B cell (primary cell): ENCODE measurements at regions of chr7 and their contacts with region 1.

Region 1: GRCh38 chr7:36736899-36737211 is 12.6 kb upstream of the AOAH start:
- DNase-seq: peak; percentile 55
- ATAC-seq: peak; percentile 77
- H3K4me3 ChIP-seq: peak overlapping the region in 1 of 5 experiments; percentile 2
- H3K4me3 Mint-ChIP-seq: peak overlapping the region; percentile 64
- H3K27ac ChIP-seq: peak overlapping the region in 1 of 2 donors; percentile 40
- H3K27ac Mint-ChIP-seq: peak overlapping the region; percentile 87
- H3K4me1 ChIP-seq: peaks cover 12 to 15% of the 10 kb centered on the region in 2 donors
- H3K4me1 Mint-ChIP-seq: peaks cover 18% of the 10 kb centered on the region
- H3K27me3 ChIP-seq: no peaks in the 10 kb centered on the region
- H3K27me3 Mint-ChIP-seq: no peaks in the 10 kb centered on the region
- CTCF ChIP-seq: no peak

Region 2: GRCh38 chr7:36708767-36709166 is 28.1 kb before region 1 on chr7:
- CTCF ChIA-PET with region 1: no interaction called
- POLR2A ChIA-PET with region 1: no interaction called
- intact Hi-C with region 1: no loop called
- DNase-seq: no peak
- ATAC-seq: no peak
- H3K4me3 ChIP-seq: no peak overlapping the region
- H3K4me3 Mint-ChIP-seq: no peak overlapping the region
- H3K27ac ChIP-seq: no peak overlapping the region
- H3K27ac Mint-ChIP-seq: no peak overlapping the region
- H3K4me1 ChIP-seq: no peaks in the 10 kb centered on the region
- H3K4me1 Mint-ChIP-seq: no peaks in the 10 kb centered on the region
- H3K27me3 ChIP-seq: no peaks in the 10 kb centered on the region
- H3K27me3 Mint-ChIP-seq: peaks cover 8% of the 10 kb centered on the region
- CTCF ChIP-seq: no peak

Region 3: GRCh38 chr7:36777062-36777461 is 40.2 kb after region 1 on chr7:
- CTCF ChIA-PET with region 1: no interaction called
- POLR2A ChIA-PET with region 1: no interaction called
- intact Hi-C with region 1: loop called (anchors 5 kb)
- DNase-seq: peak; percentile 51
- ATAC-seq: peak; percentile 54
- H3K4me3 ChIP-seq: peak overlapping the region in 2 of 5 experiments; percentile 1 to 8
- H3K4me3 Mint-ChIP-seq: peak overlapping the region; percentile 60
- H3K27ac ChIP-seq: peak overlapping the region in 1 of 2 donors; percentile 36
- H3K27ac Mint-ChIP-seq: peak overlapping the region; percentile 6
- H3K4me1 ChIP-seq: peaks cover 30 to 35% of the 10 kb centered on the region in 2 donors
- H3K4me1 Mint-ChIP-seq: peaks cover 33% of the 10 kb centered on the region
- H3K27me3 ChIP-seq: peaks cover 0 to 4% (median 0%) of the 10 kb centered on the region in 4 experiments
- H3K27me3 Mint-ChIP-seq: peaks cover 21% of the 10 kb centered on the region
- CTCF ChIP-seq: no peak